ENCODE measurements at regions of chr1 and their contacts with region 1.

Region 1: DNA sequence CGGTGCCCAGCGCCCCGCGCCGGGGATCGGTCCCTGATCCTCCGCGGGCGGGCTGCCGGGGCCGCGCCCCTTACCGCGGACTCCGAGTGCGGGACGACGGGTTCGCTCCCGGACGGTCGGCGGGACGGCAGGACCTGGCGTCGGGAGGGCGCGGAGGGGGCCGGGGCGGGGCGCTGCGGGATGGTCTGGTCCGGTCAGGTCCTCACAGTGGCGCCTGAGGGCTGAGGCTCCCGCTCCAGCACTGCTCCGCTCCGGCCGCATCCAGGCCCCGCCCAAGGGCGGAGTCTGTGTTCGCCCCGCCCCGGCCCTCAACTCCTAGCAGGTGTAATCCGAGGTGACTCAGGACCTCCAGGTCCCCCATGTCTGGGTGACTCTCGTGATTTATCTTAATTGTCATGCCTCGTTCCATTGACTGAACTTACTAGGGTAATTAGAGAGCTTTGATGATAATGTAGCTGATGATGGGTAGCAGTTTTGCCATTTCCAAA is at the start of gene RAB3B:
- DNase-seq: no peak
- H3K4me3 ChIP-seq: peak within 1 kb of the TSS; percentile 64
- CTCF ChIP-seq: no peak

Region 2: DNA sequence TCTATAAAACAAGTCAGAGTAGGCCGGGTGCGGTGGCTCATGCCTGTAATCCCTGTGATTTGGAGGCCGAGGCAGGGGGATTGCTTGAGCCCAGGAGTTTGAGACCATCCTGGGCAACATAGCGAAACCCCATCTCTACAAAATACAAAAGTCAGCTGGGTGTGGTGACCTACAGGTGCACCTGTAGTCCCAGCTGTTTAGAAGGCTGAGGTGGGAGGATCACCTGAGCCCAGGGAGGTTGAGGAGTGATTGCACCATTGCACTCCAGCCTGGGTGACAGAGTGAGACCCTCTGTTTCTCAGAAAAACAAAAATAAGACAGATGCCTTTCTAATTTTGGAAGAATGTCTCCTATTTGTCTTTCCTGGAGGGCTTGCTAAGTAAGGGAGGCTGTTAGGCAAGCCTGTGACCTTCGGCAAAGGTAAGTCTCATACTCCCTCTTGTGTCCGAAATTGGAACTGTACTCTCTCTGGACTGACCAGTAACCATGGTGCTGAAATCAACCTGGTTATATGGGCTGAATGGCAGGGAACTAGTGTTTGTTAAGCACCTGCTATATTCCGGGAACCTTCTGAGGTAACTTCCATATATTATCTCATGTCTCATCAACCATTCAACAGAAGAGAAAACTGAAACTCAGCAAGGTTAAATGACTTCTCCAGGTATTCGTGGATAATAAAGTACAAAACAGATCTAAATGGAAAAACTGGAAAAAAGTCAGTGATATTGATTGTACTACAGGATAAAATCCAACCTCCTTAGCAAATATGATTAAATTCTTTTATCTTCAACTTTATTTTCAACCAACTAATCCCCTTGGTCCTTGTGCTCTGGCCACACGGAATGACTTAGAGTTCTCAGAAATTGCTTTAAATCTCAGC is 11.8 kb after region 1 on chr1:
- CTCF ChIA-PET with region 1: interaction called, 18 read pairs
- POLR2A ChIA-PET with region 1: no interaction called
- DNase-seq: peak; percentile 70
- H3K4me3 ChIP-seq: no peak overlapping the region
- CTCF ChIP-seq: peak; percentile 83

Measured in AG04449 (cell line).